ENCODE measurements at regions of chr13 and their contacts with region 1.

Region 1: DNA sequence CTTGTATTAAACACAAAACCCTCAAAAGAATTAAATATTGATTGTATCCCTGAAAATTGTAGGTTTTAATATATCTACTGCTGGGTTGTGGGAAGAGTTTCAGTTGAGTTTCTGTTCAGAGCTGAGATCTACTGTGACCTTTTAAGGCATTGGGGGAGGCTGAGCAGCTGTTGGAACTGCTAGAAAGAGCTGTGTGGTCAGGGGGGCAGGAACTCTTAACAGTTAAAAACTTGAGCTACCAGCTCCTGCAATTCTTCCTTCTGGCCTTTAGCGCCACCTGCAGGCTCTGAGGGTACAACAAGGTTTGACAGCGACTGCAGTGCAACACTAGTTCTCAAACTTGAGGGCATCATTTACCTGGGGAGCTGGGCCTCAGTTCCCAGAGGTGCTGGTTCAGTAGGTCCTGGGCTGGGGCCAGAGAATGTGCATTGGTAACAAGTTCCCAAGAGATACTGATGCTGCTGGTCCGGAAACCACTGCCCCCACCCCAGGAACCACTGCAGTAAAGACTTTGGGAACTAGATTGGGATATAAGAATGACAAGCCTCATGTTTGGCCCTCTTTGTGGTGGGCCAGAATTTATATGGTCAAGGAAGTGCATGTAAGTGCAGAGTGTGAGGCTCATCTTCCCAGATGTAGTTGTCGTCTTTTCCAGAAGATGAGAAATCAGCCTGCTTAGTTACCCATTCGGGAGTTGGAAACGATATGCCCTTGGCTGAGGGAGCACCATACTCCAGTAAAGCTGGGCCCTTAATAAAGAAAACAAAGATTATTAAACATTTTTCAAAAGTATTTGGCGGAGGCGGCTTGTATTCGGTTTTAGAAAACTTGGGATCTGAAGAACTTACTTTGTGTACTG is 2.6 kb downstream of the RNASEH2B start:
- DNase-seq: peak; percentile 98
- H3K4me3 ChIP-seq: peak overlapping the region; percentile 99
- H3K27ac ChIP-seq: peak overlapping the region; percentile 89
- H3K4me1 ChIP-seq: peaks cover 77% of the 10 kb centered on the region
- CTCF ChIP-seq: peak; percentile 96

Region 2: DNA sequence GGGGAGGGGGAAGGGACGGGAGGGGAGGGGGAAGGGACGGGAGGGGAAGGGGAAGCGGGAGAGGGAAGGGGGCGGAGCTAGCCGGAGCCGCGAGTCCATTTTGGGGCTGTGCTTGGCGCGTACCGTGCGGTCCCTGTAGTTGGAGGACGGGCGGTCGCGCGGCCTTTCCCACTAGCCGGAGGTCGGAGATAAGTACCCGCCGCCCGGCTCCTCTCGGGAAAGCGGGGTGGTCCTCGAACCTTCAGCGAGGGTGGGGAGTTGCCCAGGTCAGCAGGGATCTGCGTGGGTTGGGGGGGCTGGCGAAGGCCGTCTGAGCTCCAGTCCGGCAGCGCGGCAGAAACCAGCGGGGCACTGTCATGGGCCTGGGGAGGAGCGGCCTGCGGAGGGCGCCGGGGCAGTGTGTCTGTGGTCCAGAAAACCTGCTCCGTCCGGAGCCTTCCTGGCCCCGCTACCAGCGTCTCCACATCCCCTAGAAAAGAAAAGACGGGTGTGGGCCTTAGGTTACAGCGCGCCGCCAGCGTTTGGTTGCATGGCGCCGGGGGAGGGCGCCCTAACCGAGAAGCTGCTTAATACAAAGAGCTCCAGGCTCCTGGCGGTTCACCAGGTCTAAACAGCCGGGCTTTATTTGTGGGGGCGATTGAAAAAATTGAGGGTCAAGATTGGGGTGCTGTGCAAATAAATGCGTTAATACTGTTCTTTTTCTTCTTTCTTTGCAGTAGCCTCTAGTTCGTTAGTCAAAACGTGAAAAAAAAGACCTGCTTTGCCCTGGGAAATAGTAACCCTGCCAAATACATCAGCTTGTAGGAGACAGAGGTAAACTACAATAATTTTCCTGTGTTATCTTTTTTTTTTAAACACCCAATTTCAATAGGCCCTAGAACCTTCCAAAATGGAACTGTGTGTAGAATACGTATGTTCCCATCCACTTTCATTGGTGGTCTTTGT is 914.9 kb before region 1 on chr13 and contains the start of gene TRIM13:
- CTCF ChIA-PET with region 1: interaction called, 7 read pairs
- POLR2A ChIA-PET with region 1: no interaction called
- intact Hi-C with region 1: loop called (anchors 5 kb)
- DNase-seq: peak; percentile 92
- H3K4me3 ChIP-seq: peak within 1 kb of the TSS; percentile 94
- H3K27ac ChIP-seq: peak within 1 kb of the TSS; percentile 87
- H3K4me1 ChIP-seq: peaks cover 39% of the 10 kb centered on the region
- CTCF ChIP-seq: peak; percentile 97
- total RNA-seq, gene TRIM13: 9.5 and 12.5 TPM in 2 replicates

Region 3: DNA sequence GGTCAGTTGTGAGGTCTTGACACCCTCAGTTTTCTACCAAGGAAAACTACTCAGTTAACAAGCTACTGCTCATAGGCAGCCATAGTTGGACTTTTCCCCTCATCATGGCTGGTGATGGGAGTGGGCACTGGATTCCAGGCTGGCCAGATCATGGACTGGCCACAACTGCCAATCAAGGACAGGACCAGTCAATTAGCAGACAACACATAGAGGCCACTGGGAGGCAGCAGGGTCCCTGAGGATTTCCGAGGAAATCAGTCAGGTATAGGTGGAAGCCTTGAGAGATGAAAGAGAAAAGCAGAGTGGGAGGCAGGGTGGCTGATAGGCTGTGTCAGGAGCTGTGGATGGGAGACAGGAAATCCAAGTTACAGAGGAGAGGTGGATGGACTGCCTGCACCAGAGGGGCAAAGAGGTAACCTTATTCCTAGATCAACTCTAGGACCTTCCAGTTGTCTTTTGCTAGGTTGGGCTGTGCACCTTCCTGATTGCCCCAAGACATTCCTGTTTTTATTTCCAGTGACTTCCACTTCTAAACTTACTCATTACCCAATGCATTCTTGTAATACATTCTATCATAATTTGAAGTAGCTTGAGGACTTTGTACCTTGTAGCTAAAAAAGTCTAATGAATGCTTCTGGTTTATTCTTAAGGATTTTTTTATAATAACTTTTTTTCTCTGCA is 535.1 kb before region 1 on chr13:
- CTCF ChIA-PET with region 1: no interaction called
- POLR2A ChIA-PET with region 1: no interaction called
- intact Hi-C with region 1: loop called (anchors 5 kb)
- DNase-seq: no peak
- H3K4me3 ChIP-seq: no peak overlapping the region
- H3K27ac ChIP-seq: no peak overlapping the region
- H3K4me1 ChIP-seq: peaks cover 42% of the 10 kb centered on the region
- CTCF ChIP-seq: peak; percentile 42; the same call in 1 of the 2 replicates

Region 4: GRCh38 chr13:50594276-50595051 is 317.7 kb before region 1 on chr13:
- CTCF ChIA-PET with region 1: interaction called, 5 read pairs
- POLR2A ChIA-PET with region 1: interaction called, 6 read pairs
- intact Hi-C with region 1: loop called (anchors 1 kb)
- DNase-seq: peak; percentile 98
- H3K4me3 ChIP-seq: peak overlapping the region; percentile 50
- H3K27ac ChIP-seq: peak overlapping the region; percentile 98
- H3K4me1 ChIP-seq: peaks cover 84% of the 10 kb centered on the region
- CTCF ChIP-seq: no peak

Region 5: GRCh38 chr13:50810998-50811397 is 101.2 kb before region 1 on chr13:
- CTCF ChIA-PET with region 1: no interaction called
- POLR2A ChIA-PET with region 1: interaction called, 7 read pairs
- intact Hi-C with region 1: loop called (anchors 2 kb)
- DNase-seq: peak; percentile 85
- H3K4me3 ChIP-seq: peak overlapping the region; percentile 50
- H3K27ac ChIP-seq: peak overlapping the region; percentile 70
- H3K4me1 ChIP-seq: peaks cover 29% of the 10 kb centered on the region
- CTCF ChIP-seq: no peak

Region 6: GRCh38 chr13:50927701-50928100 is 15.5 kb after region 1 on chr13:
- CTCF ChIA-PET with region 1: no interaction called
- POLR2A ChIA-PET with region 1: interaction called, 19 read pairs
- intact Hi-C with region 1: no loop called
- DNase-seq: no peak
- H3K4me3 ChIP-seq: no peak overlapping the region
- H3K27ac ChIP-seq: no peak overlapping the region
- H3K4me1 ChIP-seq: peaks cover 6% of the 10 kb centered on the region
- CTCF ChIP-seq: no peak

Region 7: DNA sequence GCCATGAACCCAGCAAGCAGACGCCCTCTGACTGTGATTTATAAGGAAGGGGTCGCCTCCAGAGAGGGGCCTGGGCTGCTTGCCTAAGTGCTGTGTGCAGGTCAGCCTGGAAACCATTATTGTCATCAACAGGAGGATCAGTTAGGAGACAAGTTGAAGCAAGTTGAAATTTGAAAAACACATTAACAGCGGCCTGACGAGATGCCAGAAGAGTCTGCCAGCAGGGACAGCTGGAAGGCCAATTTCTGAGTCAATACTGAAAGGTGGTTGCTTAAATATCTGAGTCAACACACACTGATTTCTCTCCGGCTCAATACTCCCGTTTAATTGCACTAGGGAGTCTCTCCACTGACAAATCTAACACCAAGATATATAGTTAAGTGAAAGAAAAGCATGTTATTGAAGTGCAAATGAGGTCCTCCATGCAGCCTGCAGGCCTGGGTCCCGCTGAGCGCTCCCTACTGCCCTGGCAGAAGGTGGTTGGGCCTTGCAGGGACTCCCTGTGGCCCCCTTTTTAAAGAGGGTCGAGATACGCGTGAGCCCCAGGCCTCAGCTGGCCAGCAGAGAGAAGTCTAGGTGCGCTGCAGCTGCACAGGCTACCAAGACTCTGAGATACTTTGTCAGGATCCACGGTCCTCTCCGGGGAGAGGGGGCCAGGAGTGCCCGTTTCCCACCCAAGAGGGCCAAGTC is 88.5 kb after region 1 on chr13:
- CTCF ChIA-PET with region 1: no interaction called
- POLR2A ChIA-PET with region 1: no interaction called
- intact Hi-C with region 1: no loop called
- DNase-seq: no peak
- H3K4me3 ChIP-seq: no peak overlapping the region
- H3K27ac ChIP-seq: no peak overlapping the region
- H3K4me1 ChIP-seq: no peaks in the 10 kb centered on the region
- CTCF ChIP-seq: no peak

Region 8: DNA sequence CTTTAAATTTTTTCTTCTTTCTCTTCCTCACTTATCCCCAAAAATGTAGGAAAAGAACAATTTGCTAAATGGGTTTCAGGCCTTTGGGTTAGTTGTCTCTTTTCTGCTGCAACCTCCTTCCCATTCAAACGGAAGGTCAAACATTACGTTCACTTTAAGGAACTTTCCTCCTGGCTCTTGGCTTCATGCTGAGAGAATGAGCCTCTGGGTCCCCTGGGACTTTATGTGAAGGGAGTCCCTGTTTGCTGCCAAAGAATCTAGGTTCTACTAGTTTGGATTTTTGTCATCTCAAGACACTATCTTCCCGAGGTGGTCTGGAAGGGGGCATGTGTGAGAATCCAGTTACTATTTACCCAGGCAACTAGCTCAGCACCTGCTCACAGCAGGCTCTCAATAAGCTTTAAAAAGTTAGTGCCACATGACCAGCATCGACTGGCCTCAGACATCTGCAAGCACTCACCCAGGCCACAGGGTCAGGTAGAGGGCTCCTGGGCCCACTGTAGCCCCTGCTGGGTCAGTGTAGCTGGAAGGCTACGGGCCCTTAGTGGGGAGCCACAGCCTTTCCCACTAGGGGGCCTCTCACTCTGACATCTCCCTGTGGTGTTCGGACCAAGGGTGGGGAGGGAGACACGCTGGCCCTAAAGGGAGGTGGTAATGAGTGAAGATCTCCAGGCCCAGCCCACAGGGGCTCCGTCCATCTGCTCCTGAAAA is 350.5 kb after region 1 on chr13:
- CTCF ChIA-PET with region 1: no interaction called
- POLR2A ChIA-PET with region 1: no interaction called
- intact Hi-C with region 1: no loop called
- DNase-seq: peak; percentile 4
- H3K4me3 ChIP-seq: no peak overlapping the region
- H3K27ac ChIP-seq: no peak overlapping the region
- H3K4me1 ChIP-seq: no peaks in the 10 kb centered on the region
- CTCF ChIP-seq: peak; percentile 58

Measured in OCI-LY7 (cell line).